Left cardiac atrium (tissue), 4 donors: ENCODE measurements at regions of chr6 and their contacts with region 1.

Region 1: DNA sequence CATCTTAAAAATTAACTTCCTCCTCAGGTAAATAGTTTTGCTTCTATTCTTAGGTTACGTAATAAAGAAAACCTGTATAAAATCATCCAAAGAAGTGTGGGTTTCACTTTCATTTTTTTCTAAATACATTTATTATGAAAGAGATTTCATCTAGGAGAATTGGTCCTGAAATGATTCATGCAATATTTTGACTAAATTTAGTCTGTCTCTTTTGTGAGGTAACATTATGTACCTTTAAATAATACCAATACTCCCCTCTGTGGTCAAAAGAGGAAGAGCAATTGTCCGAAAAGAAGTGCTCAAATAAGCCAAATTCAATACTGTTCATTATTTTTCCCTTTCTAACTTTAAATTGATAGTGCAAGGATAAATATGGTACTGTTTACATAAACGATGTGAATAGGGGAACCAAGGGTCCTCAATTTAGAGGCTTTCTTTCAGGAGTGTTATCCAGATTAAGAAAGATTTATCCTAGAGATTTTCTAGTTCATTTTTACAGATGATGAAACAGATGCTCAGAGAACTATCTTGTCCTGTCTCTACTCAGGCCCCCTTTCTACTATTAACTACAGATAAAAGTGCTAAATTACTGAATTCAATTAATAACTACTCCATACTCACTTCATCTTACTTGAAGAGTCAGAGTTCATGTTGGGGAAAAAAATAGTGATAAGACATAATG is 26.2 kb downstream of the CYP39A1 start:
- DNase-seq: no peak
- ATAC-seq: peak in 1 of 2 donors; percentile 56

Region 2: DNA sequence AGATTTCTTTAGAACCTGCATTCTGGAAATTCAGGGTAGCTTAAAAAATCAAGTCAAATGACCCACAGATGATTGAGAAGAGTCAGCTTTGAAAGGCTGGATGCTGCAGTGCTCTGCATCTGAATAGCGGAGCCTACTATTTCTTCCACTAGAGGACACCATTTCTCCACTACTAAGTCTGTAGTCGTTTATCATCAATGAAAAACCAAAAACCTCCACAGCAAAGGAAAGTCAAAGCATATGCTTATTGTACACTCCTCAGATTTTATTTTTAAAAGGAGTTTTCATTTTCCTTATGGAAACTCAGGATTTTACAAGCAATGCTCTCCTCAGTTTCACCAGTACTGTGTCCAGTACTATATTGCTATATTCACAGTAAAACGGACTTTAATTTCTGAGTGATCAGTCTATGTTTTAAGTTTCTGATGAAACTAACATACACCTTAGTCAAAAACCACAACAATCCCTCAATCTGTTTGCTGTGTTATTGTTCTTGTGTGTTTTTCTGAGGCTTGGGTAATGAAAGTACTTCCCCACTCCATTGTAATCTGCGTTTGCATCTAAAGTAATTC is 405.1 kb before region 1 on chr6:
- intact Hi-C with region 1: loop called in 1 of 2 experiments (anchors 5 kb)
- DNase-seq: no peak
- ATAC-seq: peak; percentile 63 to 83

Region 3: GRCh38 chr6:46491628-46492547 is 134.5 kb before region 1 on chr6:
- intact Hi-C with region 1: loop called (anchors 5 to 10 kb)
- DNase-seq: peak; percentile 58
- ATAC-seq: peak; percentile 89 to 91